Activated CD8-positive, alpha-beta memory T cell treated with anti-CD3 and anti-CD28 coated beads, Interleukin-2, amount 10 ng/mL, durations not matched to agents 7 days and 5 days (primary cell): ENCODE measurements at regions of chr1 and their contacts with region 1.

Region 1: GRCh38 chr1:40872281-40872680 is 10.1 kb upstream of the CITED4 start:
- DNase-seq: no peak
- ATAC-seq: no peak
- H3K4me3 Mint-ChIP-seq: no peak overlapping the region
- H3K27ac Mint-ChIP-seq: no peak overlapping the region
- H3K4me1 Mint-ChIP-seq: peaks cover 48% of the 10 kb centered on the region
- H3K27me3 Mint-ChIP-seq: no peaks in the 10 kb centered on the region

Region 2: GRCh38 chr1:40862008-40862863 is 10.0 kb before region 1 on chr1 and contains the start of gene CITED4:
- CTCF ChIA-PET with region 1: interaction called, 12 read pairs
- DNase-seq: peak; percentile 97
- ATAC-seq: peak; percentile 92
- H3K4me3 Mint-ChIP-seq: peak within 1 kb of the TSS; percentile 82
- H3K27ac Mint-ChIP-seq: peak within 1 kb of the TSS; percentile 97
- H3K4me1 Mint-ChIP-seq: peaks cover 22% of the 10 kb centered on the region
- H3K27me3 Mint-ChIP-seq: peaks cover 30% of the 10 kb centered on the region
- total RNA-seq, gene CITED4: 2.9 to 4.4 TPM